A549 (cell line): ENCODE measurements at regions of chr1 and their contacts with region 1.

Region 1: GRCh38 chr1:200488375-200489165 is 78.7 kb upstream of the ZNF281 start:
- DNase-seq: peak; percentile 44 to 84
- ATAC-seq: peak; percentile 90
- H3K4me3 ChIP-seq: no peak overlapping the region
- H3K27ac ChIP-seq: peak overlapping the region; percentile 83 to 93
- H3K4me1 ChIP-seq: peaks cover 63% of the 10 kb centered on the region
- CTCF ChIP-seq: peak; percentile 91
- EP300 ChIP-seq: no peak
- POLR2A ChIP-seq: no peak
- RAD21 ChIP-seq: peak; percentile 98 to 99

Region 2: GRCh38 chr1:199684686-199685273 is 803.8 kb before region 1 on chr1:
- CTCF ChIA-PET with region 1: interaction called, 13 read pairs
- POLR2A ChIA-PET with region 1: no interaction called
- DNase-seq: peak; percentile 56 to 82
- ATAC-seq: peak; percentile 94 to 95
- H3K4me3 ChIP-seq: no peak overlapping the region
- H3K27ac ChIP-seq: peak overlapping the region; percentile 66 to 73
- H3K4me1 ChIP-seq: peaks cover 47% of the 10 kb centered on the region
- CTCF ChIP-seq: peak; percentile 94
- EP300 ChIP-seq: no peak
- POLR2A ChIP-seq: no peak
- RAD21 ChIP-seq: peak; percentile 97 to 98

Region 3: DNA sequence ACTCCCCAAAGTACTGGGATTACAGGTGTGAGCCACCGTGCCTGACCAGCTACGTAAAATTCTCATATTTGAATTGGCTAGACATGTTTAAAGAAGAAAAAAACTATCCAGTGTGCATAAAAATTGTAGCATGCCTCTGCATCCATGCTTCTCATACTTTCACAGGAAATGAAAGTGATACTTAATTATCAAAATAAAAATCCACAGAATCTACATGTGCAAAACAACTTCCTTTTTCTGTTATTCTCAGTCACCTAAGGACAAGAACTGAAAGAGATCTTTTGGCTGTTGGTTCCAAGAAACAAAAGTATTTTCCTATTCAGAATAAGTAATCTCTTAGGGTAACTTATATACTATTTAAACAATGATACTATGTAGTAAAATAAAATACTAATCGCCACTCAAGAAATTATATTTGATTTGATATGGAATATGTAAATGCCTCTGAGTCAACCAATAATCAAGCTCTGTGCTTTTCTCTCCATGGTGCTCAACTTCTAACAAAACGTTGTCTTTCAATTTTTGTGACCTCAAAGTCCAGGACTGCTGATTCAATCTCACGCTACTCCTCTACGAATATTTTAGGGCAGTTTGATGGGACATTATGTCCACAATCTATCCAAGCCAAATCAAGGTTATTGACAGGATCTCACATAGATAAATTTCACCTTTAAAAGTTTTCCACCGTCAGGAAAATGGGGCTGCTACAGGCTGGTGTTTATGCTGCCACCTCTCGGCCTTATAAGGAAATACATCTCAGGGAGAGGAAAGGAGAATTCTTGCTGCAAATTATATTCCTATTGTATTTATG is 181.4 kb before region 1 on chr1:
- CTCF ChIA-PET with region 1: interaction called, 11 read pairs
- POLR2A ChIA-PET with region 1: interaction called, 5 read pairs
- DNase-seq: peak; percentile 47 to 76
- ATAC-seq: no peak
- H3K4me3 ChIP-seq: no peak overlapping the region
- H3K27ac ChIP-seq: peak overlapping the region; percentile 16 to 45; a peak in 1 of 6 replicates
- H3K4me1 ChIP-seq: peaks cover 8% of the 10 kb centered on the region; the same call in 1 of the 3 replicates
- CTCF ChIP-seq: peak; percentile 83
- EP300 ChIP-seq: no peak
- POLR2A ChIP-seq: no peak
- RAD21 ChIP-seq: peak; percentile 67 to 74; a peak in 4 of 5 replicates

Region 4: GRCh38 chr1:200334661-200335256 is 153.8 kb before region 1 on chr1:
- CTCF ChIA-PET with region 1: no interaction called
- POLR2A ChIA-PET with region 1: no interaction called
- DNase-seq: no peak
- ATAC-seq: no peak
- H3K4me3 ChIP-seq: no peak overlapping the region
- H3K27ac ChIP-seq: peak overlapping the region; percentile 47 to 78
- H3K4me1 ChIP-seq: peaks cover 42% of the 10 kb centered on the region
- CTCF ChIP-seq: no peak
- EP300 ChIP-seq: no peak
- POLR2A ChIP-seq: no peak
- RAD21 ChIP-seq: no peak

Region 5: DNA sequence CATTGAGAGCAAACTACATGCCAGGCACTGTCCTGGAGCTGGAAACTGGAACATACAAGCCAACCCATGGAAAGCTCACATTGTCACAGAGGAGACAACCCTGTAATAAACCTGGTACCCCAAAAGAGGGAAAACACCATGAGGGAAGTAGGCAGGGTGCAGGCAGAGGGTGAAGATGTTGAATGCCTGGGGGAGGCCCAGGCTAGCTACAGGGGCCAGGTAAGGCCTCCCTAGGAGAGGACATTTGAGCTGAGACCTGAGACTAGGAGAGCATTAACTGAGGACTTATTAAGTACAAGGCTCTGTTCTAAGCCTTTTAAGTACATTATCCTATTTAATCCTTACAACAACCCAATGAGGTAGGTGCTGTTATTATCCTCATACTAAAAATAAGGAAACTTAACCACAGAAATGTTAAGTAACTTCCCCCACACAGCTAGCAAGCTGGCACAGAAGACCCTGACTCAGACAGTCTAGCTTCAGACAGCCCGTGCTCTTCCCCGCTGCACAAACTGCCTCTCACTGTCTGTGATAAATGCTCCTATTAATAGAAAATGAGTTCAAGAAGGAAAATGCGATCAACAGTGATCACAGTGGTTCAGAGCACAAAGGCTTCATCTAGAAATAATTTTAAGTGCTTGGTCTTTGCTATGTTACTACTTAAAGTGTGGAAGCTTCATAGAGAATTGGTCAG is 120.6 kb before region 1 on chr1:
- CTCF ChIA-PET with region 1: interaction called, 10 read pairs
- POLR2A ChIA-PET with region 1: interaction called, 5 read pairs
- DNase-seq: no peak
- ATAC-seq: no peak
- H3K4me3 ChIP-seq: no peak overlapping the region
- H3K27ac ChIP-seq: peak overlapping the region; percentile 88 to 95
- H3K4me1 ChIP-seq: peaks cover 96% of the 10 kb centered on the region
- CTCF ChIP-seq: no peak
- EP300 ChIP-seq: no peak
- POLR2A ChIP-seq: no peak
- RAD21 ChIP-seq: no peak

Region 6: GRCh38 chr1:200379431-200379755 is 109.2 kb before region 1 on chr1:
- CTCF ChIA-PET with region 1: interaction called, 10 read pairs
- POLR2A ChIA-PET with region 1: interaction called, 3 read pairs
- DNase-seq: peak; percentile 81 to 92
- ATAC-seq: peak; percentile 86 to 88
- H3K4me3 ChIP-seq: no peak overlapping the region
- H3K27ac ChIP-seq: peak overlapping the region; percentile 88 to 95
- H3K4me1 ChIP-seq: peaks cover 90% of the 10 kb centered on the region
- CTCF ChIP-seq: no peak
- EP300 ChIP-seq: peak; percentile 95 to 96
- POLR2A ChIP-seq: no peak
- RAD21 ChIP-seq: peak; percentile 34 to 71; a peak in 4 of 5 replicates

Region 7: DNA sequence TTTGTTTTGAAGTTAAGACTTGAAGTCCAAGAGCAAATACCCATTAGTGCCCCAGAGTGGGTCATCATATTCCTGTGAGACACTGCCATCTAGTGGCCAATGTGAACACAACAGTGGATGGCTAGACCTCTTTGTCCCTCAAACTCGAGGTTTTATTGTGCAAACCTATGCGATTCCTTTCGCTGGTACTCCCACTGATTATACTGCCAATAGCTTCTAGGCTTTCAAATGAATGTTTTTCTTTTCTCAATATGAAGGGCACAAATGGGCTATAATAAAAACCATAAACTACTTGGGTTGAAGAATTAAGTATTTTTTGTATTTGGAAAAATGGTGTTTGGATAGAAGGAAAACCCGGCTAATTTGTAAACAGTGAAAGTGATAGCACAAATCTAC is 21.7 kb after region 1 on chr1:
- CTCF ChIA-PET with region 1: interaction called, 12 read pairs
- POLR2A ChIA-PET with region 1: no interaction called
- DNase-seq: peak; percentile 86 to 89
- ATAC-seq: peak; percentile 95 to 99
- H3K4me3 ChIP-seq: no peak overlapping the region
- H3K27ac ChIP-seq: no peak overlapping the region
- H3K4me1 ChIP-seq: peaks cover 7% of the 10 kb centered on the region; the same call in 1 of the 3 replicates
- CTCF ChIP-seq: peak; percentile 95
- EP300 ChIP-seq: no peak
- POLR2A ChIP-seq: no peak
- RAD21 ChIP-seq: peak; percentile 96 to 97